Activated B cell treated with CpG ODN at 0.5 μM for 24 hours (primary cell): ENCODE measurements at regions of chr2 and their contacts with region 1.

Region 1: GRCh38 chr2:27303093-27304025 is 4.9 kb downstream of the UCN start:
- DNase-seq: no peak
- ATAC-seq: peak; percentile 75
- H3K4me3 Mint-ChIP-seq: peak overlapping the region; percentile 72
- H3K27ac Mint-ChIP-seq: no peak overlapping the region
- H3K4me1 Mint-ChIP-seq: peaks cover 11% of the 10 kb centered on the region
- H3K27me3 Mint-ChIP-seq: peaks cover 23% of the 10 kb centered on the region
- CTCF ChIP-seq: peak; percentile 61

Region 2: DNA sequence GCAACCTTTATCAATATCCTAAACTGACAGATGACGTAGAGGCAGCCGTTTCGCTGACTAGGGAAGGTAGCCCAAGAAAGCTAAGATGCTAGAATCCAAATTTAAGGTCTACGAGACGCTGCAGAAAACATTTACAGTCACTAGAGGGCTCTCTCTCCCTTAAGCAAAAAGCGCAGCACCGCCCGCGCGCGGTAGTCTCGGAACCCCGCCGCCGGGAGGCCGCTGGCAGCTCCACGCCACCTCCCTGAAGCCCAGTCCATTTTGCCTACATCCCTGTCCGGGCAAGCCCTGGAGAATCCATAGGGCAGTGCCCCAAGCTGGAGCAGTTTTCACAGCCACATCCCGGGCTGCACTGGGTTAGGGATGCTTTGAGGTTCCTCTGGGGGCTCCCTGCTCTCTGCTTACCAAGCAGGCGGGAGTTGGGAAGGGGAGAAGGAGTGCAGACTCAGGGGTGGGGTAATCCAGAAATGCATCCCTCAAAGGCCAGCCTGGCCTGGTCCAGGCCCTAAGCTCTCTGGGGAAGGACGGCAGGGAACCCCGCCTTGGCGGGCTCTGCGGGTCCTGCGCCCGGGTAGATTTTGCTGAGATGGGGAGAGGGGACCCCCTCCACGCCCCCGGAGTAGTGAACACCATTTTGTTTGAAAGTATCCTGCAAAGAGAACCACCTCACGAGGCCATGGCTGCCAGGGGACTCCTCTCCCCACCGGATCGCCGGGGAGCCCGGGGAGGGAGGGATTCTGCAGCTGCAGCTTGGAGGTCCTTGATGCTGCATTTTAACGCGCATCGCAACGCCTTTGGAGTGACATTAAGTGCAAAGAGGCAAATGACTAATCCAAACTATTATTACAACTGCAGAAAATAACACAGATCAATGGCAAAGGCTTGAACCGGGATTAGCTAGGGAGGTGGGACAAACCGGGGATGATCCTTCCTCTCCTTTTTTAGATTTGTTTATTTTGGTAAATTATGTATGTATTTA is 456.7 kb before region 1 on chr2:
- CTCF ChIA-PET with region 1: interaction called, 6 read pairs
- POLR2A ChIA-PET with region 1: no interaction called
- intact Hi-C with region 1: loop called (anchors 1 kb)
- DNase-seq: peak; percentile 54
- ATAC-seq: peak; percentile 71
- H3K4me3 Mint-ChIP-seq: peak overlapping the region; percentile 77
- H3K27ac Mint-ChIP-seq: no peak overlapping the region
- H3K4me1 Mint-ChIP-seq: peaks cover 20% of the 10 kb centered on the region
- H3K27me3 Mint-ChIP-seq: peaks cover 47% of the 10 kb centered on the region
- CTCF ChIP-seq: no peak

Region 3: GRCh38 chr2:26959331-26959730 is 344.0 kb before region 1 on chr2:
- CTCF ChIA-PET with region 1: interaction called, 28 read pairs
- POLR2A ChIA-PET with region 1: no interaction called
- intact Hi-C with region 1: loop called (anchors 1 kb)
- DNase-seq: no peak
- ATAC-seq: no peak
- H3K4me3 Mint-ChIP-seq: no peak overlapping the region
- H3K27ac Mint-ChIP-seq: no peak overlapping the region
- H3K4me1 Mint-ChIP-seq: no peaks in the 10 kb centered on the region
- H3K27me3 Mint-ChIP-seq: peaks cover 21% of the 10 kb centered on the region
- CTCF ChIP-seq: no peak

Region 4: DNA sequence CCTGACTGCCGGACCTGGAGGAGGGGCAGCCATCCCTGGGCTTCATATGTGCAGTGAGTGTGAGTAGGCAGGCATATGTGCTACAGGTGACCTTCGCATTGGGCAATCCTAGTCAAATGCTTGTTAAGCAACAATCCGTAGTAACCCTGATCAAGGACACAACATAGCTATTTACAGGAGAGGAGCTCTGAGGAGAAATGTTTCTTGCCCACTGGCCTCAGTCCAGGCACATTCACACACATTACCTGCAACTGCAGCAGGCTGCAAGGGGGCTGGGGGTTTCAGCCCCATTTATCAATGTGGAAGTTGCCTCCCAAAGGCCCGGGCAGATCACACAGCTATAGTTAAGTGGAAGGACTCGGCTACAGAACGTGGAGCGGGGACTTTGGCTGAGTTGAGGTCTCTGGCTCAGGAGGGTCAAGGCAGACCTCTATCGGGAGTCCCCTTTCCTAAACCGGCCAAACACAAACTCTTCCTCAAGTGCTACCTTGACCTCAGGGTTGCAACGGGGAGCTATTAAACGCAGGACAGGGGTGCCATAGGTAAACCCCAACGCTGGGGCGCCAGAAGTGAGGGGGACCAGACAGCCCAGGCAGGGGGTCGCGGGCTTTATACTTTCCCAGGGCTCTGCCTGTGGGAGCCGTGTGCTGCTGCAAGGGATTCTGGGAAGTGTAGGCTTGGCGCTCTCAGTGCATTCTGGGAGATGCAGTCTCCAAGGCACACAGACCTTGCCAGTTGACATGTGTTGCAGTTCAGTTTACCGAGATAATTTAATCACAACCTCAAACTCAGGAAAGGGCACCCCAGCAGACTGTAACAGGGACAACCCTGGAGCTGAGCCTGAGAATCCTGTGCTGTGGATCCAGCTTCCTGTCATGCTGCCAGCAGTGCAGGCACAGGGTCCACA is 207.4 kb before region 1 on chr2:
- CTCF ChIA-PET with region 1: interaction called, 14 read pairs
- POLR2A ChIA-PET with region 1: no interaction called
- intact Hi-C with region 1: loop called (anchors 1 kb)
- DNase-seq: no peak
- ATAC-seq: peak; percentile 98
- H3K4me3 Mint-ChIP-seq: peak overlapping the region; percentile 81
- H3K27ac Mint-ChIP-seq: no peak overlapping the region
- H3K4me1 Mint-ChIP-seq: peaks cover 11% of the 10 kb centered on the region
- H3K27me3 Mint-ChIP-seq: no peaks in the 10 kb centered on the region
- CTCF ChIP-seq: no peak

Region 5: DNA sequence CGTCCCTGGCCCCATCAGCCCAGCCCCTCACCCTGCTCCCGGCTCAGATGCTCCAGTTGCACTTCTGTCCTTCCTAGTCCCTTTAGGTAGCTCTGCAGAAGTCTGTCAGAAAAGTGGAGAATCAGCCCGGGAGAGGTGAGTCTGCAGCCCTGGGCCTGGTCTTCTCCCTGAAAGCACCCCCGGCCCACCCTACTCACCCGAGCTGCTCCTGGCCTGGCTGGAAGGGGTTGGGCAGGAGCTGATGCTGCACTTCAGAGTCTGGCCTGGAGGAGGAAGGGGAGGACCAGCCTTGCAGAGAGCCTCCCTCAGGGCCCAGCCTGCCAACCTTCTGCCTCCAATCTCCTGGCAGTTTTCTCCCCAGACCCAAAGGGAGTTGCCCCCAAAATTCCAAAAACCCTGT is 201.0 kb before region 1 on chr2:
- CTCF ChIA-PET with region 1: interaction called, 14 read pairs
- POLR2A ChIA-PET with region 1: no interaction called
- intact Hi-C with region 1: loop called (anchors 1 kb)
- DNase-seq: no peak
- ATAC-seq: no peak
- H3K4me3 Mint-ChIP-seq: no peak overlapping the region
- H3K27ac Mint-ChIP-seq: no peak overlapping the region
- H3K4me1 Mint-ChIP-seq: no peaks in the 10 kb centered on the region
- H3K27me3 Mint-ChIP-seq: peaks cover 6% of the 10 kb centered on the region
- CTCF ChIP-seq: no peak

Region 6: DNA sequence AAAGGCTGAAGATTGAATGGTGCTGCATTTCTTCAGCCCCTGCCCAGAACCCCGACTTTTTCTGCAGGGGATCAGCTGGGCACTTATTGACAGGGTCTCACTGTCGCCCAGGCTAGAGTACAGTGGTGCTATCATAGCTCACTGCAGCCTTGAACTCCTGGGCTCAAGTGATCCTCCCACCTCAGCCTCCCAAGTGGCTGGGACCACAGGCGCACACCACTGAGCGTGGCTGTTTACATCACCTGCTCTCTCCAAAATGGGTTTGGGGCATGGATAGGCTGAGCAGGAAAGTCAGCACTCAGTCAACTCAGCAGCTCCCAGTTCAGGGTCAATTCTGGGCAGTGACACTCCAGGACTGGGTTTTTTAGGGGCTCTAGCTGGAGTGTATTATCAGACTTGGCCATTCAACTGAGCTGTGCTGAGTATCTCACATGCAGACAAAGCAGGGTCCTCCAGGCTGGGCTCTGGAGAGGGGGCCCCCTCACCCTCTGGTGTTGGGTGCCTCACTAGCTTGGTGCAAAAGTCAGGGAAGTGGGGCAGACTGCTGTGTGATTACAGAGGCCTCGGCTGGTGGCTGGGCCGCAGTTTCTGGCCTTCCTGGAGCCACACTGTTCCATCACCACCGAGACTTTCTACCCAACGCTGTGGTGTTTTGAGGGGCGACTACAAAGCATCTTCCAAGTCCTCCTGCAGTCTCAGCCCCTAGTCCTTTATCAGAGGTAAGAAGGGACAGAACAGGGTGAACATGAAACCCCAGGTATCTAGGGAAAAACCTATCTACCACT is 175.3 kb before region 1 on chr2:
- CTCF ChIA-PET with region 1: no interaction called
- POLR2A ChIA-PET with region 1: no interaction called
- intact Hi-C with region 1: no loop called
- DNase-seq: no peak
- ATAC-seq: no peak
- H3K4me3 Mint-ChIP-seq: no peak overlapping the region
- H3K27ac Mint-ChIP-seq: no peak overlapping the region
- H3K4me1 Mint-ChIP-seq: peaks cover 12% of the 10 kb centered on the region
- H3K27me3 Mint-ChIP-seq: no peaks in the 10 kb centered on the region
- CTCF ChIP-seq: no peak

Region 7: DNA sequence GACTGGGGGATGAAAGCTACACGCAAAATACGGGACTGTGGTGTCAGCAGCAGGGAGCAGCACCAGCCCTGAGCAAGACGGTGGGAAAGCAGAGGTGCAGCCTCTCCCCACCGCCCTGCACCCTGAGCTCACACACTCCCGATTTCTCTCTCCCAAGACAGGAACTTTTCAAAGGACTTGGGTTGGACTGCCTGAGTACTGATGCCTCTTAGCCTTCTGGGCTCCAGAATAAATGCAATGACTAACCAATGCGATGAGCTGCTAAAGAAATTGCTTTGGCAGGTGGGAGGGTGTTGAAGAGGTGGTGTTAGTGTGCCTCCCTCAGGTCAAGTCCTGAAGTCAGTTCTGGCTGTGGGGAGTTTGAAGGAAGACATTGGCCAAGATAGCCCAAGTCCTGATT is 11.5 kb before region 1 on chr2:
- CTCF ChIA-PET with region 1: interaction called, 15 read pairs
- POLR2A ChIA-PET with region 1: no interaction called
- intact Hi-C with region 1: no loop called
- DNase-seq: no peak
- ATAC-seq: no peak
- H3K4me3 Mint-ChIP-seq: no peak overlapping the region
- H3K27ac Mint-ChIP-seq: no peak overlapping the region
- H3K4me1 Mint-ChIP-seq: peaks cover 6% of the 10 kb centered on the region
- H3K27me3 Mint-ChIP-seq: peaks cover 15% of the 10 kb centered on the region
- CTCF ChIP-seq: no peak

Region 8: GRCh38 chr2:27322766-27323595 is 19.6 kb after region 1 on chr2 and contains the start of gene MPV17:
- CTCF ChIA-PET with region 1: interaction called, 7 read pairs
- POLR2A ChIA-PET with region 1: interaction called, 6 read pairs
- intact Hi-C with region 1: loop called (anchors 2 kb)
- DNase-seq: peak; percentile 79
- ATAC-seq: peak; percentile 95
- H3K4me3 Mint-ChIP-seq: peak within 1 kb of the TSS; percentile 99
- H3K27ac Mint-ChIP-seq: peak within 1 kb of the TSS; percentile 96
- H3K4me1 Mint-ChIP-seq: peaks cover 25% of the 10 kb centered on the region
- H3K27me3 Mint-ChIP-seq: no peaks in the 10 kb centered on the region
- CTCF ChIP-seq: no peak
- total RNA-seq, gene MPV17: 78.1 and 98.3 TPM in 2 replicates

Region 9: DNA sequence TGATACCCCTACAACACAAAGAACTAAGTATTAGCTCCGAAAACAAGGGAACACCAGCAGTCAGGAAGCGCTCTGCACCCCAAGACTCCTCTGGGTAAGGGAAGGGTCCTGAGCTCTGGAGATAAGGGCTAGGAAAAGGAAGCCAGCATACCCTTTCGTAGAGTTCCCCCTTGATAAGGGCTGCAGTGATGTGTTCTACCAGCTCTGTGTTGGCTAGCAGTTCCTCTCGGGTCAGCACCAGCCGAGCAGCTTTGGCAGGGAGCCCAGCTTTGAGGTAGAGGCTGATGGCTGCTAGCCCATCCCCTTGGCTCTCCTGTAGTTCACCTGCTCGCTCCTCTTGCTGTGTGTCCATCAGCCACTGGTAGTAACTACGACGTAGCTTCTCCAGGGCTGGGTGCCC is 157.8 kb after region 1 on chr2:
- CTCF ChIA-PET with region 1: no interaction called
- POLR2A ChIA-PET with region 1: no interaction called
- intact Hi-C with region 1: no loop called
- DNase-seq: no peak
- ATAC-seq: no peak
- H3K4me3 Mint-ChIP-seq: no peak overlapping the region
- H3K27ac Mint-ChIP-seq: no peak overlapping the region
- H3K4me1 Mint-ChIP-seq: no peaks in the 10 kb centered on the region
- H3K27me3 Mint-ChIP-seq: no peaks in the 10 kb centered on the region
- CTCF ChIP-seq: no peak